MCF 10A (cell line): ENCODE measurements at regions of chr12 and their contacts with region 1.

Region 1: GRCh38 chr12:24728366-24728765 is 220.5 kb downstream of the BCAT1 start:
- DNase-seq: peak; percentile 45
- H3K4me3 Mint-ChIP-seq: no peak overlapping the region
- H3K27ac Mint-ChIP-seq: no peak overlapping the region
- H3K4me1 Mint-ChIP-seq: no peaks in the 10 kb centered on the region
- H3K27me3 Mint-ChIP-seq: no peaks in the 10 kb centered on the region
- CTCF ChIP-seq: peak; percentile 52

Region 2: DNA sequence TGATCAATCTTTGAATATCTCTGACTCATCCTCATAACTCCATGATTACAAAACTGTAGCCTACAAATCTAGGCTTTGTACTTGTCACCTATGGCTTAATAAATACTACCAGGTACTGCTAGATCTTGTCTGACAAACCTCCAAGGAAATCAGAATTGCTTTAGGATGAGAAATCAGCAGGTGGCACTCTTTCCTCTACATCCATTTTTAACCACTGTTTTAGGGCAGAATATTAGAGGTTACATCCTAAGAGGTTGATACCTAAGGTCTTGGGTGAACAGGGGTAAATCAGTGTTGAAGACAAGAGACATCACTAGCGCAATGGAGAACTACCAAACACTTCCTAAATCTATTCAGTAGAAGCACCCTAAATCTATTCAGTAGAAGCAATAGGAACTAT is 715.8 kb before region 1 on chr12:
- CTCF ChIA-PET with region 1: no interaction called
- POLR2A ChIA-PET with region 1: no interaction called
- intact Hi-C with region 1: loop called (anchors 1 kb)
- DNase-seq: peak; percentile 54
- H3K4me3 Mint-ChIP-seq: no peak overlapping the region
- H3K27ac Mint-ChIP-seq: no peak overlapping the region
- H3K4me1 Mint-ChIP-seq: no peaks in the 10 kb centered on the region
- H3K27me3 Mint-ChIP-seq: no peaks in the 10 kb centered on the region
- CTCF ChIP-seq: peak; percentile 54

Region 3: DNA sequence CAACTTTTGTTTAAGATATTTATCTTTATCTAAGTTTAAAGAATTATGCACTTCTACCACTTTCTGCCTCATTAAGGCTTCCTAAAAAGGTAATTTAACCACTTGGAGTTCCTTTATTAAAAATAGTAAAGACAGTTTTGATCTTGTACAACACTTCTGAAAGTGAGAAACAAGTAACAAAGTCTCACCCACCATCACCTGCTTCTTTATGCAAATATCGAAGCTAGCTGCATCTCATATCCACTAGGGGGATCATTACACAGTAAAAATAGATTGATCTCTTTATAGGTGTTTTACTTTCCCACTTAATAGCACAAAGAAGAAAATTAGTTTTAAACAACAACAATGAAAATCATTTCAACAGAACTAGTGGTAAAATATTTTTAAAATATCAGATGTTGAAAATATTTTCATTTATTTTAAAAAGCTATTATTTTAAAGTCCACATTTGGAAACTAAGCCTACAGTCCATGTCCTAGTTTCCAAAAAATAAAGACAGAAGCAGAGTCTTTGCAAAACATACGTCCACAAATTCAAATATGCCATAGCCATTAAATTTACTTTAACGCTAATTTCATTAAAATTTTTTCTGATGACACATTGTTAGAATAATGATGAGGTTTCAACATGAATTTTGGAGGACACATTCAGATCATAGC is 618.9 kb before region 1 on chr12:
- CTCF ChIA-PET with region 1: interaction called, 4 read pairs
- POLR2A ChIA-PET with region 1: no interaction called
- intact Hi-C with region 1: loop called (anchors 5 kb)
- DNase-seq: peak; percentile 27
- H3K4me3 Mint-ChIP-seq: no peak overlapping the region
- H3K27ac Mint-ChIP-seq: no peak overlapping the region
- H3K4me1 Mint-ChIP-seq: no peaks in the 10 kb centered on the region
- H3K27me3 Mint-ChIP-seq: no peaks in the 10 kb centered on the region
- CTCF ChIP-seq: peak; percentile 36

Region 4: DNA sequence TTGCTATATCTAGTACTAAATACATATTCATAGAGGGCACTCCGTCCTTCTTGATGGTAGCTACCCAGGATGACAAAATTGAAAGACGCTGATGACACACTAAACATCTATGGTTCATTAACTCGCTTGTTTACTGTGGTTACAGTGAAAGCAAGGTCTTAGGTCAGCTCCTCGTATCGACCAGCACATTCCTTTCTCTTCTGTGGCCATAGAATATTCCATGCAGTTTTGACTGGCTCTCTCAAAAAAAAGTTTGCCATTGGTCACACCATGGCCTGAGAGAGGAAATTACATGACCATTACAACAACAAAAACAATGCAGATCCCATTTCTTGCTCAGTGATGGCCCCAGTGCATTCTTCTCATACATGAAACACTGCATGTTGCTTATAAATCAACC is 367.5 kb before region 1 on chr12:
- CTCF ChIA-PET with region 1: interaction called, 4 read pairs
- POLR2A ChIA-PET with region 1: no interaction called
- intact Hi-C with region 1: loop called (anchors 5 kb)
- DNase-seq: no peak
- H3K4me3 Mint-ChIP-seq: no peak overlapping the region
- H3K27ac Mint-ChIP-seq: no peak overlapping the region
- H3K4me1 Mint-ChIP-seq: peaks cover 15% of the 10 kb centered on the region
- H3K27me3 Mint-ChIP-seq: no peaks in the 10 kb centered on the region
- CTCF ChIP-seq: no peak

Region 5: DNA sequence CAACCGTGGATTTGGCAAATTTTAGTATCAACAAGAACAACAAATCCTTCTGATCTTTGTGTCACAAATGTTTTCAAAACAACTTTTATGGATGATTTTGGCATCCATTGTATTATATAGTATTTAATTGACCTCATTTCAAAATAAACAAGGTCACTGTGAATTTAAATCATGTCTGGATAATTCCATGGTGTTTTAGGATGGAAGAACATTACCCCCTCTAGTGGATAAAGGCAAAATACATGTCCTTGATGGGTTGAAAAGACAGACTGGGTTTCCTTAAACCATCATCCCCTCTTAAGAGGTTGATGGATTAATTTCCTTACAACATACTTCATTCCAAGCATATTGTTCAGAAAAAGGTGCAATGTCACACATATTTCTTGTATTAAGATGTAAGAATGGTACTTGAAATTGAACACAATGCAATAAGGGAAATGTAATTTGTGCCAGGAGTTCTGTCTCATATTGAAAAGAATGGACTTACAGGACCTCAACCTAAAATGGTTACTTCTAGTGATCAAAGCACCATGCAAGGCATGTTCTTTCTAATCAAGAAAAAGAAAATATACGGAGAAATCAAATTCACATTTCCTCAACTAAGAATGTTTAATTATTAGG is 131.5 kb before region 1 on chr12:
- CTCF ChIA-PET with region 1: no interaction called
- POLR2A ChIA-PET with region 1: no interaction called
- intact Hi-C with region 1: loop called (anchors 2 kb)
- DNase-seq: peak; percentile 54
- H3K4me3 Mint-ChIP-seq: no peak overlapping the region
- H3K27ac Mint-ChIP-seq: no peak overlapping the region
- H3K4me1 Mint-ChIP-seq: peaks cover 6% of the 10 kb centered on the region
- H3K27me3 Mint-ChIP-seq: peaks cover 22% of the 10 kb centered on the region
- CTCF ChIP-seq: peak; percentile 53

Region 6: DNA sequence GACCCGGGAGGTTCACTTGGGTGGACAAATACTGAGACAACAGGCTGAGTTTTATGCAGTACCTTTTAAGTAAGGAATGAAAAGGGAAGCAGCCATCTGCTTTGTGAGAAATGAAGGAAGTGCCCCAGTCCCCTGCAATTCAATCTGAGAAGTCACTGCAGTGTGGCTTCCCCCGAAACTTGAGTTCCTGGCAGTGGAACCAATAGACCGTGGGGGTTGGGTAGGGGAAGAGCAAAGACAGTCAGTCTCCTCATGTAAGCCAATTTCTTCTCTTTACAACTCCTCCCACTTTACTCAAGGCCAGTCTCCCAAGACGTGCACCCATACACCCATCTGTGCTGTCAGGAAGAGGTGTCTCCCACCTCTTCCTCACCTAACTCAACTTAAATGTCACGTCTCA is 14.0 kb after region 1 on chr12:
- CTCF ChIA-PET with region 1: no interaction called
- POLR2A ChIA-PET with region 1: no interaction called
- intact Hi-C with region 1: no loop called
- DNase-seq: no peak
- H3K4me3 Mint-ChIP-seq: no peak overlapping the region
- H3K27ac Mint-ChIP-seq: no peak overlapping the region
- H3K4me1 Mint-ChIP-seq: no peaks in the 10 kb centered on the region
- H3K27me3 Mint-ChIP-seq: no peaks in the 10 kb centered on the region
- CTCF ChIP-seq: no peak

Region 7: GRCh38 chr12:25320123-25321006 is 592.0 kb after region 1 on chr12:
- CTCF ChIA-PET with region 1: no interaction called
- POLR2A ChIA-PET with region 1: no interaction called
- intact Hi-C with region 1: no loop called
- DNase-seq: no peak
- H3K4me3 Mint-ChIP-seq: no peak overlapping the region
- H3K27ac Mint-ChIP-seq: no peak overlapping the region
- H3K4me1 Mint-ChIP-seq: peaks cover 13% of the 10 kb centered on the region
- H3K27me3 Mint-ChIP-seq: no peaks in the 10 kb centered on the region
- CTCF ChIP-seq: no peak